H1 (cell line): ENCODE measurements at regions of chr20 and their contacts with region 1.

Region 1: GRCh38 chr20:57445298-57445697 is 54.1 kb downstream of the RBM38 start:
- DNase-seq: no peak
- H3K4me3 ChIP-seq: no peak overlapping the region
- H3K27ac ChIP-seq: no peak overlapping the region
- H3K4me1 ChIP-seq: peaks cover 0 to 11% (median 6%) of the 10 kb centered on the region in 4 experiments; a peak in 5 of 7 replicates
- H3K27me3 ChIP-seq: 0 out of 7 replicates have a peak, but pooled peaks cover 0 to 3% (median 0%) of the 10 kb centered on the region in 4 experiments
- CTCF ChIP-seq: no peak
- EP300 ChIP-seq: no peak
- POLR2A ChIP-seq: no peak
- RAD21 ChIP-seq: no peak

Region 2: GRCh38 chr20:57108732-57109573 is 336.3 kb before region 1 on chr20:
- CTCF ChIA-PET with region 1: no interaction called
- POLR2A ChIA-PET with region 1: no interaction called
- DNase-seq: peak in 1 of 2 experiments; percentile 54
- H3K4me3 ChIP-seq: no peak overlapping the region
- H3K27ac ChIP-seq: no peak overlapping the region
- H3K4me1 ChIP-seq: peaks cover 0 to 2% (median 0%) of the 10 kb centered on the region in 4 experiments; a peak in 2 of 7 replicates
- H3K27me3 ChIP-seq: no peaks in the 10 kb centered on the region
- CTCF ChIP-seq: peak; percentile 37 to 59 (median 40)
- EP300 ChIP-seq: no peak
- POLR2A ChIP-seq: no peak
- RAD21 ChIP-seq: peak; percentile 31 to 39; a peak in 3 of 4 replicates

Region 3: GRCh38 chr20:57432874-57433491 is 12.3 kb before region 1 on chr20:
- CTCF ChIA-PET with region 1: interaction called, 12 read pairs
- POLR2A ChIA-PET with region 1: no interaction called
- DNase-seq: no peak
- H3K4me3 ChIP-seq: no peak overlapping the region
- H3K27ac ChIP-seq: no peak overlapping the region
- H3K4me1 ChIP-seq: peaks cover 0 to 12% (median 10%) of the 10 kb centered on the region in 4 experiments; a peak in 5 of 7 replicates
- H3K27me3 ChIP-seq: no peaks in the 10 kb centered on the region
- CTCF ChIP-seq: no peak
- EP300 ChIP-seq: no peak
- POLR2A ChIP-seq: no peak
- RAD21 ChIP-seq: no peak